Psoas muscle (tissue), 8 donors: ENCODE measurements at regions of chr2 and their contacts with region 1.

Region 1: DNA sequence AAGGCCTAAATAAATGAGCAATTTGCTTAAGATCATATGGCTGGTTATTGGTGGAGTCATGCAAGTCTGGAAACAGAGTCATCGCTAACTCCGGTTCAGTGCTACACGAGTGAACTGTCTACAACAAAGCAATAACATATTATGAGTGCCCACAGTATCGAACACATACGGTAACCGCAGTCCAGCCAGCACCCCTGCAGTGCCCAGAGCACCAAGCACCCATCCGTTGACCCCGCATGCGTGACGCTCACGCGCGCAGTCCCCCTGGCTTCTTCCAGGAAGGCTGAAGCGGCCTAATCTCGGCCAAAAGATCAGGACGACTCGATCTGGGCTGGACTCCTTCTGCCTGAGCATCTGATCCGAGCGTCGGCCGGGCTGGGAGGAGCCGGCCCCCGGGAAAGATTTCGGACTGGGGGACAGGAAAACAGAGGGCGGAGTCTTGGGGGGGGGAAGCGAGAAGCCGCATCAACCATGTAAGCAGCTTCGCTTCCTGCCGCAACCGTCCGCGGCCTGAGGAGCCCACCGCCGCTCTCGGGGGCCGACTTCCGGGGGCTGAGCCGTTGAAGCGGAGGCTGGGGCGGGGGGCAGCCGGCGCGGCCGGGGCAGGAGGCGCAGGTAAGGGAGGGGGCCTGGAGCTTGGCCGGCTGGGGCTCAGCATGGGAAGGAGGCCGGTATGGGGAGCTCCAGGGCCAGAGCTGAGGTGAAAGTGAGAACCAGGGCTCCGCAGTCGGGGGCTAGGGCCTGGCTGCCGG is at the start of gene PIKFYVE:
- DNase-seq: peak; percentile 95 to 97
- ATAC-seq: peak; percentile 97 to 99 (median 98)
- H3K4me3 ChIP-seq: peak within 1 kb of the TSS; percentile 88
- H3K27ac ChIP-seq: peak within 1 kb of the TSS; percentile 95
- H3K4me1 ChIP-seq: peaks cover 30% of the 10 kb centered on the region
- H3K27me3 ChIP-seq: no peaks in the 10 kb centered on the region
- CTCF ChIP-seq: no peak
- total RNA-seq, gene PIKFYVE: 12.0 to 14.2 (median 13.5) TPM

Region 2: GRCh38 chr2:208195531-208195930 is 70.4 kb before region 1 on chr2:
- intact Hi-C with region 1: no loop called
- DNase-seq: no peak
- ATAC-seq: no peak
- H3K4me3 ChIP-seq: no peak overlapping the region
- H3K27ac ChIP-seq: no peak overlapping the region
- H3K4me1 ChIP-seq: no peaks in the 10 kb centered on the region
- H3K27me3 ChIP-seq: no peaks in the 10 kb centered on the region
- CTCF ChIP-seq: no peak

Region 3: GRCh38 chr2:208280933-208281332 is 15.0 kb after region 1 on chr2:
- intact Hi-C with region 1: no loop called
- DNase-seq: no peak
- ATAC-seq: no peak
- H3K4me3 ChIP-seq: no peak overlapping the region
- H3K27ac ChIP-seq: no peak overlapping the region
- H3K4me1 ChIP-seq: peaks cover 7% of the 10 kb centered on the region
- H3K27me3 ChIP-seq: no peaks in the 10 kb centered on the region
- CTCF ChIP-seq: no peak

Region 4: GRCh38 chr2:208315081-208315788 is 49.3 kb after region 1 on chr2:
- intact Hi-C with region 1: loop called in 1 of 2 experiments (anchors 5 kb)
- DNase-seq: peak; percentile 31 to 48
- ATAC-seq: peak; percentile 79 to 96 (median 94)
- H3K4me3 ChIP-seq: no peak overlapping the region
- H3K27ac ChIP-seq: peak overlapping the region; percentile 46
- H3K4me1 ChIP-seq: peaks cover 21% of the 10 kb centered on the region
- H3K27me3 ChIP-seq: no peaks in the 10 kb centered on the region
- CTCF ChIP-seq: no peak